ENCODE measurements at regions of chr5 and their contacts with region 1.

Region 1: GRCh38 chr5:134225618-134226440 is at the start of gene PPP2CA:
- DNase-seq: peak; percentile 99
- H3K4me3 Mint-ChIP-seq: peak within 1 kb of the TSS; percentile 97
- H3K27ac Mint-ChIP-seq: peak within 1 kb of the TSS; percentile 100
- H3K4me1 Mint-ChIP-seq: peaks cover 34% of the 10 kb centered on the region
- H3K27me3 Mint-ChIP-seq: no peaks in the 10 kb centered on the region
- CTCF ChIP-seq: no peak
- total RNA-seq, gene PPP2CA: 317 and 359 TPM in 2 replicates

Region 2: GRCh38 chr5:133825631-133826289 is 400.1 kb before region 1 on chr5:
- CTCF ChIA-PET with region 1: no interaction called
- POLR2A ChIA-PET with region 1: no interaction called
- intact Hi-C with region 1: no loop called
- DNase-seq: no peak
- H3K4me3 Mint-ChIP-seq: no peak overlapping the region
- H3K27ac Mint-ChIP-seq: no peak overlapping the region
- H3K4me1 Mint-ChIP-seq: peaks cover 7% of the 10 kb centered on the region
- H3K27me3 Mint-ChIP-seq: peaks cover 27% of the 10 kb centered on the region
- CTCF ChIP-seq: no peak

Region 3: DNA sequence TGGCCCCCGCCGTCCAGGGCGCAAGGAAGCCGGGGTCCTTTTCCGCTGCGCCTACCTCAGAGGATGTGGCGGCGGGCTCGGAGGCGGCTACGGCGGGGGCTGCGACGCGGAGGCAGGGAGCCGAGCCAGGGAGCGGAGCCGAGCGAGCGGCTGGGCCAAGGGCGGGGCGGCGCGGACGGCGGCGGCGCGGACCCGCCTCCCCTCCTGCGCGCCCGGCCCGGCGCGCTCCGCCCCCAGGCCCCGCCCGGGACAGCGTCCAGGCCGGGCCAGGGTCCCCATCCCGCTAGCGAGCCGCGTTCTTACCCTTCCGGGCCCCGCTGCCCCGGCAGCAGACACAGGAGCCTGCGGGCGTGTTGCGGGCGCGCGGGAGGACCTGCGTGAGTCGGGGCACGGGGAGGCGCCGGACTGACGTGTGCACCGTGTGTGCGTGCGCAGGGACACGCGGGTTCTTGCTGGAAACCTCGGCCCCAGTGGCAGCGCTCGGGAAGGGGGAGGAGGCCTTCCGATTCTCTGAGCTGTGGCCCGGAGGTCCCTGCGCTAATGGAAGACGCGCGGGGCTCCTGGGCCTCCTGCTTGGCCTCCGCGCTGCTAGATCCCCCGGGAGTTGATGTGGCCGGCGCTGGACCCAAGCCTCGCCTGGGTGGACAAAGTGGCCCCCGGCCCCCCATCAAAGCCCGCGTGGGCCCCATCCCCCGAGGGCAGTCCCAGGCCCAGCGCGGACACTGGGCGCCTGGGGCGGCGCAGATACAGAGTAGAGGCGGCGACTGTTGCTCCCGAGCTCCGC is 221.0 kb before region 1 on chr5 and contains the start of gene VDAC1:
- CTCF ChIA-PET with region 1: no interaction called
- POLR2A ChIA-PET with region 1: interaction called, 27 read pairs
- intact Hi-C with region 1: no loop called
- DNase-seq: peak; percentile 82
- H3K4me3 Mint-ChIP-seq: peak within 1 kb of the TSS; percentile 90
- H3K27ac Mint-ChIP-seq: peak within 1 kb of the TSS; percentile 95
- H3K4me1 Mint-ChIP-seq: peaks cover 40% of the 10 kb centered on the region
- H3K27me3 Mint-ChIP-seq: no peaks in the 10 kb centered on the region
- CTCF ChIP-seq: no peak
- total RNA-seq, gene VDAC1: 262 and 334 TPM in 2 replicates

Region 4: GRCh38 chr5:134204575-134204974 is 21.3 kb before region 1 on chr5:
- CTCF ChIA-PET with region 1: interaction called, 6 read pairs
- POLR2A ChIA-PET with region 1: interaction called, 148 read pairs
- intact Hi-C with region 1: no loop called
- DNase-seq: no peak
- H3K4me3 Mint-ChIP-seq: no peak overlapping the region
- H3K27ac Mint-ChIP-seq: no peak overlapping the region
- H3K4me1 Mint-ChIP-seq: peaks cover 23% of the 10 kb centered on the region
- H3K27me3 Mint-ChIP-seq: no peaks in the 10 kb centered on the region
- CTCF ChIP-seq: no peak

Region 5: DNA sequence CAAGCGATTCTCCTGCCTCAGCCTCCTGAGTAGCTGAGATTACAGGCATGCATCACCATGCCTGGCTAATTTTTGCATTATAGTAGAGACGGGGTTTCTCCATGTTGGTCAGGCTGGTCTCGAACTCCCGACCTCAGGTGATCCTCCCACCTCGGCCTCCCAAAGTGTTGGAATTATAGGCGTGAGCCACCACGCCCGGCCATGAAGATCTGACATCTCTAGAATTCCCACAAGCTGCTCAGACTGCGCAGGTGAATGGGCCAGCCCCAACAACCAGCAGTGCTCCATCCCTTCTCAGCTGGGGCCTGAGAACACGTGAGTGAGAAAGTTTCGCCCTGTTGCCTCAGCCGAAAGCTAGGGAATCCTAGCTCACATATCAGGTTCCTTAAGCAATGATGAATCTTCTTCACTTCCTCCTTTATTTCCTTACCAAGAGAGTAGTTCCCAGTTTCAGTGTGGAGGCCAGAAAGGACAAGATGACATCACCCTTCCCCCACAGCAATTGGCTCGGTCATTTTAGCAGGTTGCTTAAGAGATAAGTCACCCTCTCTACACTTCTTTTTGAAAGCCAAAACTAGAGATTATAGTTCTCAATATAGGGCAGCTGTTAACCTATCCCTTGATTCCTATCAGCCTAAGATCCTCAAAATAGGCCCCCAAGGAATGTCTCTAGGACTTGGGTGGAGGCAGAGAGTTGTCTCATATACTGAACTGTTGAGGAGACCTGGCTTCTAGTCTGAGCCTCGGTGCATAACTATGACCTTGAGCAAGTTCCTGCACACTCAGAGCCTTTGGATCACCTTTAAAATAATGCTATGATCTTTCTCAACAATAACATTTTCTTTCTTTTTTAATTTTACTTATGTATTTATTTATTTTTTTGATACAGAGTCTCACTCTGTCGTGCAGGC is 23.9 kb after region 1 on chr5:
- CTCF ChIA-PET with region 1: interaction called, 23 read pairs
- POLR2A ChIA-PET with region 1: interaction called, 349 read pairs
- intact Hi-C with region 1: loop called (anchors 1 kb)
- DNase-seq: peak; percentile 59
- H3K4me3 Mint-ChIP-seq: no peak overlapping the region
- H3K27ac Mint-ChIP-seq: peak overlapping the region; percentile 54
- H3K4me1 Mint-ChIP-seq: peaks cover 51% of the 10 kb centered on the region
- H3K27me3 Mint-ChIP-seq: no peaks in the 10 kb centered on the region
- CTCF ChIP-seq: no peak

Region 6: DNA sequence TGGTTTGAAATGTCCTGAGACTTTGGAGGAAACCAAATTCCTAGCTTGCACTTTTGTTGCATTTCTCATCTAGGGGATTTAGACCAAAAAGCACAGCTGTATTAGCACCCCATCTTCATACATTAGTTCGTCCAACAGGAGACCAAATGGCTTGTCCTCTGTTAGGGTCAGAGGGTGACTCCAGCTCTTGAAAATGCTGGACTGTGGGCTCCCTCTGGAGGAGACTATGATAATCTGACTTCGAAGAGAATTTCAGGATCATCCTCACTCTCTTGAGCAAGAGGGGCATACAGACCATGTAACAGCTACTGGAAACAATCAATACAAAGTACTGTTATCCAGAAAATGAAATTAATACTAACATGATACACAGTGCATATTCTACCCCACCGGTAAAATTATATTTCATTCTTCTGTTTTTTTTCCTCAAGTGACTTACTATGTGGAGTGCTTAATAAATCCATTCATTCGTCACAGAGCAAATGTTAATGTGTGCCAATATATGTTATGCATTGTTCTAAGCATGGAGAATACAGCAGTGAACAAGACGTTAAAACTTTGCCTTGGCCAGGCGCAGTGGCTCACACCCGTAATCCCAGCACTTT is 63.8 kb after region 1 on chr5:
- CTCF ChIA-PET with region 1: interaction called, 27 read pairs
- POLR2A ChIA-PET with region 1: interaction called, 24 read pairs
- intact Hi-C with region 1: loop called (anchors 1 kb)
- DNase-seq: peak; percentile 89
- H3K4me3 Mint-ChIP-seq: no peak overlapping the region
- H3K27ac Mint-ChIP-seq: no peak overlapping the region
- H3K4me1 Mint-ChIP-seq: no peaks in the 10 kb centered on the region
- H3K27me3 Mint-ChIP-seq: peaks cover 17% of the 10 kb centered on the region
- CTCF ChIP-seq: peak; percentile 95

Region 7: GRCh38 chr5:134648425-134649162 is 422.8 kb after region 1 on chr5 and contains the start of gene SEC24A:
- CTCF ChIA-PET with region 1: no interaction called
- POLR2A ChIA-PET with region 1: interaction called, 16 read pairs
- intact Hi-C with region 1: no loop called
- DNase-seq: peak; percentile 95
- H3K4me3 Mint-ChIP-seq: peak within 1 kb of the TSS; percentile 99
- H3K27ac Mint-ChIP-seq: peak within 1 kb of the TSS; percentile 100
- H3K4me1 Mint-ChIP-seq: peaks cover 5% of the 10 kb centered on the region
- H3K27me3 Mint-ChIP-seq: no peaks in the 10 kb centered on the region
- CTCF ChIP-seq: no peak
- total RNA-seq, gene SEC24A: 39.1 and 41.4 TPM in 2 replicates